Naive thymus-derived CD4-positive, alpha-beta T cell (primary cell): ENCODE measurements at regions of chr20 and their contacts with region 1.

Region 1: DNA sequence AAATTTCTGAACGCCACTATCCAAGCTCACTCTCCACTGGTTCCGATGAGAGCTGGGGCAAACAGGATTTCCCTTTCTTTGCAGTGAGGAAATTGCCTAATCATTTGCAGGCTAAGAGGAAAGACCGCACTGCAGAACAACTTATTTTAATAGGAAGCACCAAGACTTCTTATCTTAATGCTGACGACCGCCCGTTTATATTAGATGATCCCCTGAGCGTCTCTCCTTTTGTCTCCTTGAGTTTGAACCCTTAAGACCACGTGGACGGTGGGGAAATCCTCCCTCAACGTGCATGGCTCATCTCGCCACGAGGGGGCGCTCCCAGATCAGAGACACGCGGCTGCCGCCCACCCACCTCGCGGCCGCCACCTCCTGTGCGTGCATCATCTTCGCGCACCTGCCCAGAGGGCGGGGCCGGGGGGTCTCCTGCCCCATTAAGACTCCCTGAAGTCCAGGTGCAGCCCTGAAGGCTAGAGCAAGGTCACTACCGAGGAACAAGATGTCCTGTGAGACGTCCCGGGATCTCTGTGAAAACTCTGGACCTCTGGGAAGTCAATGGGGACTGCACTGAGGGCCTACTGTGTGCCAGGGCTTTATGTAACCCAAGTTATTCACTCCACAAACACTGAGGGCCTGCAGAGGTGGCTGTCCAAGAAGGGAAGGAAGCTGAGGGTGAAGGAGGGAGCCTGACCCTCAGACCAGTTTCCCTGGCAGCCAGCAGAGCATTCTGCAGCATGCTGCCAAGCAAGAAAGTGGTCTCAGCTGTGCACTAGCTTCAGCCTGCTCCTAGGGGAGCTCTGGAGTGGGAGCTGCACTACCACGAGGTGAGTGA is 28.1 kb downstream of the PDYN start:
- DNase-seq: peak; percentile 34 to 85 (median 62)
- ATAC-seq: peak; percentile 80
- H3K4me3 ChIP-seq: no peak overlapping the region
- H3K4me3 Mint-ChIP-seq: peak overlapping the region in 9 of 10 donors; percentile 33 to 72 (median 62)
- H3K27ac ChIP-seq: no peak overlapping the region
- H3K27ac Mint-ChIP-seq: no peak overlapping the region
- H3K4me1 ChIP-seq: no peaks in the 10 kb centered on the region
- H3K4me1 Mint-ChIP-seq: peaks cover 4 to 9% (median 7%) of the 10 kb centered on the region in 7 donors
- H3K27me3 ChIP-seq: no peaks in the 10 kb centered on the region
- H3K27me3 Mint-ChIP-seq: peaks cover 14 to 41% (median 28%) of the 10 kb centered on the region in 5 donors

Region 2: DNA sequence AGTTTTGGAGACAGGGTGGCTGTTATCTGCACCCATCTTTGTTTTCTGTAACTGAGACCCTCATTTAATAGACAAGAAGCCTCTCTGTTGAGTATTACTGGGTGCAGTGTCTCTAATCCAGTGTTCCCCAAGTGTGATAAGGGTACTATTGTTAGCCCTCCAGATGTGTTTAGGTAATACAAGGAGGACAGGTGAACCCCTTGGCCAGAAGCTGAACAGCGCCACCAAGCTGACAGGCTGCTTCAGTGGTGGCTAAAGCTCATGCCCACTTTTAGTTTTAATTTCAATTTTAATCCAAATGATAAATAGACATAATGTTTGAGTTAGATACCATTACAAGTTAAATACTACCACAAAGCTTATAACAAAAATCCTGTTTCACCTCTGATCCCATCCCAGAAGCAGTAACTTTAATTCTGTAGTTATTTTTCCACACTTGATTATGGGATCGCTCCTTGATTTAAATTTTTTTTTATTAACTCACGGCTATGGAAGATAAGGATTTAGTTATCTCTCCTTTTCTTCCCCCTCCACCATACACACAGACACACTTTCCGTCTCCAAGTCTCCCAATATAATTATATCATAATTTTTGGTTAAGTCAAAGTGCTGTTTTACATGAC is 127.5 kb after region 1 on chr20:
- CTCF ChIA-PET with region 1: interaction called, 6 read pairs
- POLR2A ChIA-PET with region 1: no interaction called
- intact Hi-C with region 1: loop called in 1 of 2 experiments (anchors 2 kb)
- DNase-seq: peak in 1 of 9 donors; percentile 19
- ATAC-seq: peak; percentile 40
- H3K4me3 ChIP-seq: no peak overlapping the region
- H3K4me3 Mint-ChIP-seq: no peak overlapping the region
- H3K27ac ChIP-seq: no peak overlapping the region
- H3K27ac Mint-ChIP-seq: no peak overlapping the region
- H3K4me1 ChIP-seq: no peaks in the 10 kb centered on the region
- H3K4me1 Mint-ChIP-seq: peaks cover 0 to 2% (median 0%) of the 10 kb centered on the region in 7 donors
- H3K27me3 ChIP-seq: peaks cover 0 to 5% of the 10 kb centered on the region in 2 donors
- H3K27me3 Mint-ChIP-seq: peaks cover 45 to 51% (median 48%) of the 10 kb centered on the region in 5 donors

Region 3: DNA sequence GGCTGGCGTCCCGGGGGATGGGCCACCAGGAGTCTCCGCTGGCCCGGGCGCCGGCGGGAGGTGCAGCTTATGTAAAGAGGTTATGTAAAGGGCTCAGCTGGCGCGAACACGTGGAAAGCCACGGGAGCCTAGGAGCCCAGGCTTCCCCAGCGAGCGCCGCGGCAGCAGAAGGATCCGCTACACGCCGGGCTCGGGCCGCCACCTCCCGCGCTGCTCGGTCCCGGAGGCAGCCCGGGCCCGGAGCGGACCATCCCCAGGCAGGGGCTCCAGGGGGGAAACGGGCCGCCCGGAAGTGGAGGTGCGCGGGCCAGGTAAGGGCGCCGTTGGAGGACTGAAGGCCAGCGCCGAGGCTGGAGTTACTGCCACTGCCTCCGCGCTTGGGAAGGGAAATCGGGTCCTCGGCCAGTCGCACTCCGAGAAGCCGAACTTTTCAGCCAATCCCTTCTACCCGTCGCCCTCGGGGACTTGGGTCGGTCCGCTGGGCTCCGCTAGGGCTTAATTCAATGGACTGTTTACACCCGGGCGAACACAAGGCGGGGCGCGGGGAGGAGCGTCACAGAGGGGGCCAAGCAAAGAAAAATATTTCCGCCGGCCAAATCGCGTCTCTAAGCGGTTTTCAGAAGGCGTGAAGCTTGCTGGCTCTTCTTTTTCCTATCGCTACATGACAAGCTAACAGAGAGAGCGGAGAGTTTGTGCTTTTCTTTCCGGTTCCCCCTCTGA is 136.3 kb after region 1 on chr20:
- CTCF ChIA-PET with region 1: no interaction called
- POLR2A ChIA-PET with region 1: no interaction called
- intact Hi-C with region 1: loop called in 1 of 2 experiments (anchors 2 kb)
- DNase-seq: peak; percentile 82 to 94 (median 92)
- ATAC-seq: peak; percentile 88
- H3K4me3 ChIP-seq: peak overlapping the region; percentile 88
- H3K4me3 Mint-ChIP-seq: peak overlapping the region; percentile 90 to 97 (median 96)
- H3K27ac ChIP-seq: peak overlapping the region; percentile 96
- H3K27ac Mint-ChIP-seq: peak overlapping the region; percentile 99 to 100 (median 100)
- H3K4me1 ChIP-seq: peaks cover 29 to 38% of the 10 kb centered on the region in 2 donors
- H3K4me1 Mint-ChIP-seq: peaks cover 36 to 58% (median 44%) of the 10 kb centered on the region in 7 donors
- H3K27me3 ChIP-seq: no peaks in the 10 kb centered on the region
- H3K27me3 Mint-ChIP-seq: peaks cover 0 to 4% (median 0%) of the 10 kb centered on the region in 5 donors